ENCODE measurements at regions of chr12 and their contacts with region 1.

Region 1: DNA sequence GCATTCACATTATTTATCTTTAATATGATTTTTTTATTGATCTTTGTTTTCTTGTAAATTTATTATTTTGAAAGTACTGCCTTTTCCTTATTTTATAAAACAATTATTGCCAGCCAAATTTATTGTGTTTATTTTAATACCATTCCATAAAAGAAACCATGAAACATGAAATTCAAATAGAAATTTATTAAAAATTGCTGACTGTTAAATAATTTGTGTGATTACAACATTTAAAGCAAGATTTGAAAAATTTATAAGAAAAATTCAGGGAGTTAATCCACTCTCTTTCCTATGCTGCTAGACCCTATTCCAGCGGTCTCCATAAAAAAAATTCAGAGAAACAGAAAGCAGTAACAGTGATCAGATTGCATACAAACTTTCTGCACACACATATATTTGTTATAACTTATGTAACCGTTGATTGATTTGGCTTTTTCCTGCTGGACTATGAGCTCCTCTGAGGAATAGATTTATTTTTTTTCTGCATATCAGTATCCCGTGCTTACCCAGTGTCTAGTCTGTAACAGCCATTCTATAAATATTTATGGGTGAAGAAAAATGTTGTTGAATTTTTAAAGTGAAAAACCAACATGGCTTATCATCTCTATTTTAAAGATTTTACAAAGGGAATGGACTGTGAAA is 68.1 kb downstream of the LRRK2 start:
- DNase-seq: no peak
- ATAC-seq: no peak

Region 2: DNA sequence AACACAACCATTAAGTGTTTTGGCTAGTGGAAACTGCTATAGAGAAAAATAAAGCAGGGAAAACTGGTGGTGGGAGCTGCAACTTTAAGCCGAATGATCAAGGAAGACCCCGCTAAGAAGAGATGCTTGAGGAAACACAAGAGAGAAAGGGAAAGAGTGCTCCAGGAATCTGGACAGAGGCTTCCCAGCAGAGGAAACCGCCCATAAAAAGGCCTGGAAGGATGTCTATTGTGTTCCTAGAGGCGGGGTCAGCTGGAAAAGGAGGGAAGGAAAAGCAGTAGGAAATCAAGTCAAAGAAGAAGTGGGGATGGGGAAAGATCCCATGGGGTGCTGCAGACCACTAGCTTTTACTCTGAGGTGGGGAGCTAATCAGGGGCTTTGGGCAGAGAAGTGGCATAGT is 199.4 kb before region 1 on chr12:
- intact Hi-C with region 1: no loop called
- DNase-seq: no peak
- ATAC-seq: no peak

Region 3: DNA sequence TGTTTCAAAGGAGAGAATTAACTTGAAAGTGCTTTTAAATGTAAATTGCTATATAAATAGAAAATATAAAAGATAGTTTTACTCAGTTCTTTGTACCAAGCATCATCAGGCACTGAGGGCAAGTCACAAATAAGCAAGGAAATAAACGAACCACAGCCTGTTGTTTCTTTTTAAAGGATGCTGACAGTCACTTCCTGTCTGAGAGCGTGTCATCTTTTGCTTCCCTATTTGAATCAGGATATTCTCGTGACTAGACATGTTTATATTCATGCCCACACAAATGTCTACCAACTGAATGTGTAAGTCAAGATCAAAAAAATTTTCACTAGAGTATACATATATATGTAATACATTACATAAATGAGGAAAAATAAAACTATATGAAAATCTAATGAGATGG is 155.7 kb before region 1 on chr12:
- intact Hi-C with region 1: no loop called
- DNase-seq: no peak
- ATAC-seq: no peak

Region 4: DNA sequence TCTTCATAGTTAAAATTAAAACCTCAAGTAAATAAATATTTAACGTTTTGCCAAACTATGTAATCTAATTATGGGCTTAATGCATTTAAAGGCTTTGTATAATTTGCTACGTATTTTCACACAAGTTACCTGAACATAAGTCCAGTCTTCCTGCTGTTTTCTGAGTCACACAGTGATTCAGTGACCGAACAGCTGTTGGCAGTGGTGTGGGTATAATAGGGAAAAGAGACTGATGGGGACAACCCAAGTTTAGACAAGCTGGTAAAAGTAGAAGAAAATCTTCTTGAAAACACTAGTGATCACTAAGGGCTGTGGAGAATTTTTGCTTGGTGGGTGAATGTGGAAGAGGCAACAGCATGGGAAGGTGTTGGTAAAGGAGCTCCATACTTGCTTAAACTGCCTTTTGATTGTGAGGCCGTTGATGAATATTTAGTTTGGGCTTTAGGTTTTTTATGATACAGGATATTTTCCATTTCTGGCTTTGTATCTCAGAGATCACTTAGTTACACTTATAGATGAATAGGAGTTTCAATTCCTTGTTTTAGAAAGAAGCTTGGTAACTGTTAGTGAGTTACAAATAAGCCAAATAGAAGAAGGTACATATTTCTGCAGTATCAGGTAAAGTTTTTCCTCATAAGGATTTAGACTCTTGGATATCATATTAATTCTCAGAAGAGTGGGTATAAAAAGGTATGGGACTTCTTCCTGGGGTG is 44.2 kb before region 1 on chr12:
- intact Hi-C with region 1: loop called in 1 of 2 experiments (anchors 10 kb)
- DNase-seq: no peak
- ATAC-seq: no peak

Measured in left colon (tissue), 2 donors.